GM13977 (cell line): ENCODE measurements at regions of chr12 and their contacts with region 1.

Region 1: DNA sequence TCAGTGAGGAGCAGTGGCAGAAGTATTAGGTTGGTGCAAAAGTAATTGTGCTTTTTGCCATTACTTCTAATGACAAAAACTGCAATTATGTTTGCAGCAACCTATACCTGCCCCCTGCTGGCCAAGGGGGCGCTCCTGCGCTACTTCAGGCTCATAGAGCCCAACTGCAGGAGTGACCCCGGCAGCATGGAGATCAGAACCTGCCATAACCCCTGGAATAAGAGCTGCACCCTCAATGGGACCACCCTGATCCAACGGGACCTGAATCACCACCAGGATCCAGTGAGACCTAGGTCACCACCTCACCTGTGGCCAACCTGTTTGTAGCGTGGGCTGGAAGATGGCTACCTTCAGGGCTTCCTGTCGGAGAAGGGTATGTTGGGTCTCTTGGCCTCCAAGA is 8.2 kb upstream of the C12orf42 start:
- DNase-seq: no peak
- CTCF ChIP-seq: peak; percentile 75

Region 2: DNA sequence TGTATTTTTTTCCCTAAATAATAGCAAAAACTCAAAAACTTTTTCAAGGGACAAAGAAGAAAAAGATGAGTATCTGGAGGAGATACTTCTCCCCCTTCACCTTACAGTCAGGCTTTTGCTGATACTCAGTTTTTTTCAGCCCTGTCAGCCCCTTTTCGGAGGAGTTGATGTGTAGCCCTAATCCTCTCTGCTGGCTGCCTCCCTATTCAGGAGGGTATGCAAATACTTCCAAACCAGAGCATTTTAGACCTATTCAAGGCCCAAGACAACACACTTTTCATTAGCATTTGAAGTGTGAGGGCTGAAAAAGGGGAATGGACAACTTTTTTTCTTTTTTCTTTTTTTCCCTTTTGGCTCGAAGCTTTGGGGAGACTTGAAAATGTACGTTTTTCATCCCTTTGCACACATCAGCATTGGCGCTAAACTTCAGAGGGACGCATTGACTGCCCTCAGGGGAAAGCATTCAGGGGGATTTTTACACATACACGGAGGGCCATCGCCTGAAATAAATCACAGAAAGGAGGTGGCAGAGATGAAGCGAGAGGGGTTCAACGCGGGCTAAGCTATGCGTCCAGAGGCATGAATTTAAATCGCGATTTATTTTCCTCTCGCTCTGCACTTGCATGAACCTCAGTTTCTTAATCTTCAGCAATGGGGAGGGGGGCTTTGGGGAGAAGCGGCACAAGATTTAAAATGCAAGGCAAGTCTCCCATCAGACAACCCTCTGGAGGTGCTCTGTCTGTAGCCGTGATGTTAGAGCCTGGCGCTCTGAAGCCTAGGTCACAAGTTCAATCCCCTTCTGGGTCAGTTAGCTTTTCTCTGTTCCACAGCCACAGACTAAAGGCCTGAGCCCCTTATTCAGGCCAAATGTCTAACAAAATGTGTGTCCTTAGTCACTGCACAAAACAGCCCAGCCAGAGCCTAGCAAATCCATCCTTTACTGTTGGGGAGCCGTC is 460.2 kb before region 1 on chr12:
- in situ Hi-C with region 1: no loop called
- DNase-seq: no peak
- CTCF ChIP-seq: no peak

Region 3: GRCh38 chr12:103326190-103326589 is 177.8 kb before region 1 on chr12:
- in situ Hi-C with region 1: loop called (anchors 25 kb)
- DNase-seq: peak; percentile 42
- CTCF ChIP-seq: peak; percentile 50